PC-9 (cell line): ENCODE measurements at regions of chr5 and their contacts with region 1.

Region 1: GRCh38 chr5:78294248-78295034 is at the start of gene AP3B1:
- DNase-seq: peak; percentile 97 to 99
- H3K4me3 ChIP-seq: peak within 1 kb of the TSS; percentile 94
- H3K27ac ChIP-seq: peak within 1 kb of the TSS; percentile 52
- H3K4me1 ChIP-seq: peaks cover 9% of the 10 kb centered on the region; the same call in 1 of the 2 replicates
- H3K27me3 ChIP-seq: no peaks in the 10 kb centered on the region
- CTCF ChIP-seq: no peak
- total RNA-seq, gene AP3B1: 36.7 and 44.0 TPM in 2 replicates

Region 2: GRCh38 chr5:77709993-77710685 is 584.3 kb before region 1 on chr5:
- CTCF ChIA-PET with region 1: no interaction called
- POLR2A ChIA-PET with region 1: no interaction called
- intact Hi-C with region 1: no loop called
- DNase-seq: no peak
- H3K4me3 ChIP-seq: no peak overlapping the region
- H3K27ac ChIP-seq: no peak overlapping the region
- H3K4me1 ChIP-seq: no peaks in the 10 kb centered on the region
- H3K27me3 ChIP-seq: no peaks in the 10 kb centered on the region
- CTCF ChIP-seq: no peak

Region 3: DNA sequence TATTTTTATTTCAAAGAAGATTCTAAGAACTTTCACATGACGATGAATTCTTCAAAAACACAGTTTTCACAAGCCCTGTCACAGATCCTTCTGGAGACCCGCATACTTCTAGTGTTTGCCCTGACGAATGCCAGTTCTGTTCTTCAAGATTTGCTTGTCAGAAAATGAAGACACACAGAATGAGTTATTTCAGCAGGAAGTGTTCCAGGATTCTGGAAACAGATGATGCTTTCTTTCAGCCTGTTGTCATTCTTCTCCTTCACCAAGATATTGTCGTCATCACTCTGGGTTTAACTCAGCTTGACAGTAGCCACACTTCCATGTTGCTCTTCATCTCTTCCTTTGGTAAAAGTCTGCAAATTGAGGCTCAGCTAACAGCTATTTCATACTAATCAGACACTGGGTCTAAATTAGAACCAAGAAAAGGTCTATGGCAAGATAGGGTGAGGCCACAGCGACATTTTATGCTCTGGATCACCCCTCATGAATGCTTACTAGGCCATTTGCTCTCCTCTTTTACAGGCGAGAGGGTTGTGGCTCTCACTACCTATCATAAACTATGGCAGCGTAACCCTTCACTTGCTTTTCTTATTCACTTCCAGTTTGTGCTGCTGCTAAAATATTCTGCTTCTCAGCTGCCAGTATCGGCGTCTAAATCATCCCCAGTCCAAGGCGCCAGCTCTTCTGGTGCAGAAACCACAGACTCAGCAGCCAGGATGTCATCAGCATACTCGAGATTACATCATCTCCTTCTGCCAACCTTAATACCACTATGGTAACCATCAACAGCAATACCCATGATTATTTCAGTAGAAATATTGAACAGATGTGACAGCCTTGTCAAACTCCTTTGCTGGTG is 358.7 kb before region 1 on chr5:
- CTCF ChIA-PET with region 1: no interaction called
- POLR2A ChIA-PET with region 1: no interaction called
- intact Hi-C with region 1: no loop called
- DNase-seq: no peak
- H3K4me3 ChIP-seq: no peak overlapping the region
- H3K27ac ChIP-seq: no peak overlapping the region
- H3K4me1 ChIP-seq: no peaks in the 10 kb centered on the region
- H3K27me3 ChIP-seq: 0 out of 2 replicates have a peak, but pooled peaks cover 4% of the 10 kb centered on the region
- CTCF ChIP-seq: no peak

Region 4: DNA sequence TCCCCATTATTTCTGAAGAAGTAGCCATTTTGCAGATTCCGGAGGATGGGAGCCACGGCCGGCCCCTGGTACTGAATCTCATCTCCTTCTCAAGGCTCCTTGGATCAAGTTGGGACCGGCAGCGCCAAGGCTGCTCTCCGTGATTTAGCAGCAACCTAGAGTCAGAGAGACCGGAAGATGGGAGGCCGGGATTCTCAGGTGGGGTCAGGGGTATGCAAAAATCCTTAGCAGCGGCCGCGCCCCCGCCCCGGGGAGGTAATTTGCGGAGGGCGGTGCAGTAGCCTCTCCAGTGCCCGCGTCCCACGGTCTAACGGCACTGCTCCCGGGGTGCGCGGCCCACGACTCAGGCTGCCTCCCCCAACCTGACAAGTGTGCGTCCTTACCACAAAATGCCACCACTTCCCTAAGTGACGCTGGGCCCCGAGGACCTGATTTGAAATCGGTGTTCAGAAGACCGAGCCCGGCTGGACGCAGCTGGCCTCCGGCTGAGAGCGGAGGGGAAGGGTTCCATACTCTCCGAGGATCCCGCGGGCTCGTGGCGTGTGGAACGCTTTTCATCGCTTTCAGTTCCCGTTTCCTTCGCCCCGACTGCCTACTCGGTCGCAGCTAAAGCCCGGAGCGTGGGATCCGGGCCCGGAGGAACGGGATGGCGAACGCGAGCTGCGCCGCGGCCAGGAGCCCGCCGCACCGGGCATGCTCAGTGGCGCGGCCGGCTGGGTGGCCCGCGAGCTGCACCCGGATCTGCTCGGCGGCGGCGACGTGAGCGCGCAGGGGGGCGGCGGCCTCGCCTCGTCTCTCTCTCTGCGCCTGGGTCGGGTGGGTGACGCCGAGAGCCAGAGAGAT is 65.6 kb after region 1 on chr5 and contains the start of gene SCAMP1:
- CTCF ChIA-PET with region 1: interaction called, 4 read pairs
- POLR2A ChIA-PET with region 1: interaction called, 8 read pairs
- intact Hi-C with region 1: loop called (anchors 1 kb)
- DNase-seq: peak; percentile 81 to 95
- H3K4me3 ChIP-seq: peak within 1 kb of the TSS; percentile 86
- H3K27ac ChIP-seq: peak within 1 kb of the TSS; percentile 87
- H3K4me1 ChIP-seq: peaks cover 12% of the 10 kb centered on the region
- H3K27me3 ChIP-seq: no peaks in the 10 kb centered on the region
- CTCF ChIP-seq: peak; percentile 21; the same call in 1 of the 2 replicates
- total RNA-seq, gene SCAMP1: 38.7 and 41.1 TPM in 2 replicates